ACHN (cell line): ENCODE measurements at regions of chr7 and their contacts with region 1.

Region 1: DNA sequence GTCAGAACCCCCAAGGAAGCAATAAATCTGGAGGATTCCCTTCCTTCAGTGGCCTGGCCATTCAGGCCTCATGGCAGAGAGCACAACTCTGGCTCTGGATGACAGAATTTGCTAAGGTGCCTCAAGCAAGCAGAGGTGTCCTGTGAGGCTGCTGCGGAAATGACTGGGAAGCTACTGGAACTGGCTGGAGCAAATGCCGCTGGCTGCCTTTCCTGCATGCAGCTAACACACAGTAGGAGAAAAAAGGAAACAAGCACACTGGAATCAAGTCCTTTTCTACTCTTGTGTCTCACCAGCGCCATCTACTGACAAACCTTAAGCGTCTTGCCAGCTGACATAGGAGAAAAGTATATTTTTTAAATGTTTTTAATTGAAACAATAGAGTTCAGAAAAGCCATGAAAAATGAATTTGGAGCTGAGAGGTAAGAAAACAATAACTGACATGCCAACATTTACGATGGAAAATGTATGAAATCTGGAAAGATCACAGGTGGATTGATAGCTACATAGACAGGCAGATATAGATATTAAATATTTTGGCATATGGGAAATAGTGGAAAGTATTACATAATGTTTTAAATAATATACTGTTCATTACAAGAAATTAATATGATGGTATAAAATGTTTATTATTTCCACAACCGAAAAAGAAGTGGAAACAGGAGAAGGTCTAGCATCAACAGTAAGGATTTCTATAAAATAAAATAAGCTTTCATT is 951.6 kb downstream of the ANKRD7 start:
- DNase-seq: peak; percentile 78

Region 2: DNA sequence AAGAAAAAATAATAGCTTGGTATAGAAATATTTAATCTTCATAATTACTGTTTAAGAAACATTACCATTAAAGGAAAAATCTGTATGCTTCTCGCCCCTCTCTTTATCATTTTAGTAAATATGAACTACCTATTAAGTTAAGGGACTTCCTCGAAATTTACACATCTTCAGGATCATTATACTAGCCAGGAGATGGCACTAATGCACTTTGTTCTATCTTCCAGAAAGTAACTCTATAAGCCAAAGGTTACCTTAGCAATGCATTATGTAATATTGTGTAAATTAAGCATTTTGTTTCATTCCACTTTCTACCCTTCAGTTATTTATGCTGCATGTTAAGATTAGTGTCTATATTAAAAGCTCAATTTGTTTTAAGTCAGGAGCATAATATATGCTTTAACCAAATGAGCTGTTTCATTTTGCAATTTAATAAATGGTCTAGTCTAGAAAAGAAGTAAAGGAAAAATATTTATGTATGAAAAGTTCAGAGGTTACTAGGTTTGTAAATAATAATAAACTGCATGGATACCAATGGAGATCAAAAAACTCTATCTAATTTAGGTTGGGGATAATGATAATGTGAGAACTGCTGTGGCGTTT is 823.1 kb before region 1 on chr7:
- in situ Hi-C with region 1: no loop called
- DNase-seq: peak; percentile 69

Region 3: GRCh38 chr7:118918556-118918955 is 257.5 kb before region 1 on chr7:
- in situ Hi-C with region 1: loop called (anchors 25 kb)
- DNase-seq: peak; percentile 60

Region 4: DNA sequence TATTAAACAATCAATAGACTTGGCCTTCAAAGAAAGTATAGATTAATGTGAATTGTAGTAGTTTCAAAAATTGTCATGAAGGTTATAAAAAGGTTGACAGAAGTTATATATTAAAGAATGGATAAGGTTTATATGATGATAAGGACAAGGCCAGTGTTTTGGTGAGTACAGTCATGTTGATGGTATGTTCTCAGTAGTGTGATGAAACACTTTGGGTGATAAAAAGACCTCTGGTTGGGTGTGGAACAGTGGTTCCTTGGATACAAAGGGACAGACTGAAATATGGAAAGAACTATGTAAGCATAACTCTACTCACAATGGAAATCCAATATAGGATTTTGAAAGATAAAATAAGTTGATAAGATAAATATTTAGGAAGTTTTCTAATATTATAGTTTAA is 85.2 kb before region 1 on chr7:
- in situ Hi-C with region 1: no loop called
- DNase-seq: no peak